Endothelial cell of umbilical vein (primary cell): ENCODE measurements at regions of chr19 and their contacts with region 1.

Region 1: DNA sequence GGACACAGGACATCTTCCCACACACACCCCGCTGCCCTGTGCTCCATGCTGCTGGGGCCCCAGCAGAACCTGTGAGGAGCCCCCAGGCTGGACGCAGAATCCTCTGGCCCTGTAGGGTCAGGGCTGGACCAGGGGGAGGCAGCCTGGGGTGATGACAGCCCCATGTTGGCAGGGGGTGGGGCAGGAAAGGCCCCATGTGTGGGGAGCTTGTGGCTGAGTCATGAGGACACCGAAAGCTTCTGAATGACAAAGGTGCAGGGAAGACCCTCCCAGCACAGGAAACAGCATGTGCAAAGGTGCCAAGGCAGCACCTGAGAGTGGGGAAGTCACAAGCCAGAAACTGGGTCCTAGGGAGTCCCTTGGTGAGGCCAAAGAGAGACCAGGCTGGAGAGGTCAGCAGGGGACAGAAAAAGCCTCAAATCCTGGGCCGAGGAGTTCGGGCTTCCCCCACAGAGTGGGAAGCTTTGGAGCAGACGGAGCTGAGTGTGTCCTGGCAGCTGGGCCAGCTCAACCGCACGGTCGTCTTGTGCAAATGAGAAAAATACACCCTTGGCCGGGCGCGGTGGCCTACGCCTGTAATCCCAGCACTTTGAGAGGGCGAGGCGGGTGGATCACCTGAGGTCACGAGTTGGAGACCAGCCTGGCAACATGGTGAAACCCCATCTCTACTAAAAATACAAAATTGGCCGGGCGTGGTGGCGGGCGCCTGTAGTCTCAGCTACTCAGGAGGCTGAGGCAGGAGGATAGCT is 17.5 kb downstream of the ATP8B3 start:
- DNase-seq: no peak
- H3K4me3 ChIP-seq: no peak overlapping the region
- H3K27ac ChIP-seq: no peak overlapping the region
- H3K4me1 ChIP-seq: no peaks in the 10 kb centered on the region
- H3K27me3 ChIP-seq: no peaks in the 10 kb centered on the region
- CTCF ChIP-seq: no peak
- POLR2A ChIP-seq: no peak

Region 2: DNA sequence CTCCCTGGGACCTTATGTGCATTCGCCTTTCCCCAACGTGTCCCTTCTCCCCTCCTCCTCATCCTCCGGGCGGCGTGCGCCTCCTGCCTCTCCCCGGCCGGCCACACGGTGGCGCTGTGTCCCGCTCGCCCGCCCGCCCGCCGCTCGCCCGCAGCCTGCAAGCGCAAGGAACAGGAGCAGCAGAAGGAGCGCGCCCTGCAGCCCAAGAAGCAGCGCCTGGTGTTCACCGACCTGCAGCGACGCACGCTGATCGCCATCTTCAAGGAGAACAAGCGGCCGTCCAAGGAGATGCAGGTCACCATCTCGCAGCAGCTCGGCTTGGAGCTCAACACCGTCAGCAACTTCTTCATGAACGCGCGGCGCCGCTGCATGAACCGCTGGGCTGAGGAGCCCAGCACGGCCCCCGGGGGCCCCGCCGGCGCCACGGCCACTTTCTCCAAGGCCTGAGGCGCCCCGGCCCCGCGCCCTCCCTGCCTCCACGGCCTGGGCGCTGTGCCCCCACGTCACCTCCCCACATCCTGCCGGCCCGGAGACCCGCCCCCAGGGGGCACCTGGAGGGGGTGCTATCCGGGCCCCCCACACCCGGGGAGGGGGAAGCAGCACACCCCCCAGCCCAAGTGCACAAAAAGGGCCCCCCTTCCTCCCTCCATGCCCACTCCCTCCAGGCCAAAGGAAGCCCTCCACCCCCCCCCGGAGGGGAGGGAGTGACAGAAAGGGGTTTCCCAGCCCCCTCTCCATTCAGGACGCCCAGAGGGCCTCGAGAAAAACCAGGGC is 19.4 kb before region 1 on chr19:
- CTCF ChIA-PET with region 1: interaction called, 58 read pairs
- POLR2A ChIA-PET with region 1: no interaction called
- dilution Hi-C with region 1: no loop called
- intact Hi-C with region 1: loop called (anchors 1 kb)
- DNase-seq: no peak
- H3K4me3 ChIP-seq: no peak overlapping the region
- H3K27ac ChIP-seq: no peak overlapping the region
- H3K4me1 ChIP-seq: no peaks in the 10 kb centered on the region
- H3K27me3 ChIP-seq: peaks cover 28 to 34% of the 10 kb centered on the region in 2 experiments
- CTCF ChIP-seq: peak; percentile 39 to 64
- POLR2A ChIP-seq: no peak

Region 3: DNA sequence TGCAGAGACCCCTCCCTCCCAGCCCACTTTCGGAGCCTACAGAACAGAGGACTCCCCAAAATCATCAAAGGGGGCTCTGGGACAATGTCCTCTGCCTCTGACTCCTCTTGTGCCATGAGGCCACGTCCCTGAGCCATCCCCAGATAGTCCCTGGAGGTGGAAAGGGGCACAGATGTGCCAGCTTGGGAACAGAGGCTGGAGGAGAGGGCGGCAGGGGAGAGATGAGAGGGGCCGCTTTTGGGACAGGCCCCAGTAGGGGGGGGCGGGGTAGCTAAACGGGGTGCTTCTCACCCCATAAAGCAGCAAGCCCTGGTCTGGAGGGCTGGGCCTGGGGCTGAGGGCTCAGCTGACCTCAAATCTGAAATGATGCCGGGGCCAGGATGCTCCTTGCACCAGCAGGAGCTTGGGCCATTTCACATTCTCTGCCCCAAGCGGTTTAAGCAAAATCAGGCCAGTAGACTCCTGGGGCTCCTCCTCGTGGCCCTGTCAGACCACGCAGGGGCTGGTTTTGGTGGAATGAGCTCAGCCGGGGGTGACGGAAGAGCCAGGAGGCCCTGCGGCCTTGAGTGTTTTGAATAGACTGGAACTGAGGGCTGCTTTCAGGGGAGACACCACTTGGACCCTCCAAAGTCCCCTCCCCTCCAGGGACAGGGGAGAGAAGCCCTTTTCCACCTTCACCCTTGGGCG is 14.2 kb before region 1 on chr19:
- CTCF ChIA-PET with region 1: interaction called, 58 read pairs
- POLR2A ChIA-PET with region 1: no interaction called
- dilution Hi-C with region 1: no loop called
- intact Hi-C with region 1: loop called (anchors 1 kb)
- DNase-seq: no peak
- H3K4me3 ChIP-seq: no peak overlapping the region
- H3K27ac ChIP-seq: no peak overlapping the region
- H3K4me1 ChIP-seq: no peaks in the 10 kb centered on the region
- H3K27me3 ChIP-seq: peaks cover 17 to 30% of the 10 kb centered on the region in 2 experiments
- CTCF ChIP-seq: no peak
- POLR2A ChIP-seq: no peak

Region 4: DNA sequence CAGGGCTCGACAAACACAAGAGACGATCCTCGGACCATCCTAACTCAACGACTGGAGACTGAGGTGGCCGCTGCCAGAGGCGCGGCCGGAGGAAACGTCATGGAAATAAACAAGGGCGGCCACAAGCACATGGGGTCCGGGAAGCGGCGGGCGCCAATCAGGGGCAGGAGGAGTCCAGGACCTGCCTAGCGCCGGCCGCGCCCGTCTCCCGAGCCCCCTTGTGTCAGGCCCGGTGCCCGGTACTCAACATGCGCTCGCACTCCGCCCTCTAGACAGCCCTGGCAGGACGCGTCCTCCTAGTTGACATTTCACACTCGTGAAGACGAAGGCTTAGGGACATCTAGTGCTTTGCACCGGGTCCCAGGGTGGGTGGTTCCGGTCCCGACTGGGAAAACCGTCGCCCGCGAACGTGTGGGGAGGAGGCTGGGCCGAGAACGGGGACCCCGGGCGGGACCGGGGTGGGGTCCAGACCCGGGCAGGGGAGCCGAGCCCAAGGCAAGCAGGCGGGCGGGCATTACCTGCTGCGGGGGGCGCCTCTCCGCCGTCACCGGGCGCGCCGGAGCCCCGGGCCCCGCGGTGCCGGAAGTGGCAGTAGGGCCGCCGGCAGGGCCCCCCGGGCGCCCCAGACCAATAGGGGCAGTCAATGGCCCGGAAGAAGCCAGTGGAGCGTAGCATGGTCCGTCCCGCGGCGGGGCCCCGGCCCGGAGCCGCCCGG is 53.2 kb after region 1 on chr19:
- CTCF ChIA-PET with region 1: no interaction called
- POLR2A ChIA-PET with region 1: no interaction called
- dilution Hi-C with region 1: no loop called
- intact Hi-C with region 1: no loop called
- DNase-seq: peak; percentile 64
- H3K4me3 ChIP-seq: peak overlapping the region; percentile 47 to 76 (median 67)
- H3K27ac ChIP-seq: peak overlapping the region; percentile 99
- H3K4me1 ChIP-seq: peaks cover 8% of the 10 kb centered on the region
- H3K27me3 ChIP-seq: no peaks in the 10 kb centered on the region
- CTCF ChIP-seq: no peak
- POLR2A ChIP-seq: no peak

Region 5: GRCh38 chr19:1884719-1885334 is 90.2 kb after region 1 on chr19:
- CTCF ChIA-PET with region 1: no interaction called
- POLR2A ChIA-PET with region 1: no interaction called
- dilution Hi-C with region 1: no loop called
- intact Hi-C with region 1: no loop called
- DNase-seq: no peak
- H3K4me3 ChIP-seq: peak overlapping the region; percentile 83 to 92 (median 88)
- H3K27ac ChIP-seq: peak overlapping the region; percentile 78
- H3K4me1 ChIP-seq: peaks cover 27% of the 10 kb centered on the region
- H3K27me3 ChIP-seq: no peaks in the 10 kb centered on the region
- CTCF ChIP-seq: no peak
- POLR2A ChIP-seq: peak; percentile 61